WTC11 (cell line): ENCODE measurements at regions of chr4 and their contacts with region 1.

Region 1: GRCh38 chr4:37452952-37453280 is 208.4 kb downstream of the NWD2 start:
- DNase-seq: peak; percentile 45
- ATAC-seq: peak; percentile 72
- H3K4me3 Mint-ChIP-seq: peak overlapping the region; percentile 73
- H3K27ac Mint-ChIP-seq: no peak overlapping the region
- H3K4me1 Mint-ChIP-seq: peaks cover 15% of the 10 kb centered on the region
- H3K27me3 Mint-ChIP-seq: peaks cover 50% of the 10 kb centered on the region
- CTCF ChIP-seq: peak; percentile 36; the same call in 1 of the 2 replicates

Region 2: GRCh38 chr4:37441276-37441994 is 11.5 kb before region 1 on chr4:
- CTCF ChIA-PET with region 1: interaction called, 22 read pairs
- POLR2A ChIA-PET with region 1: no interaction called
- DNase-seq: no peak
- ATAC-seq: no peak
- H3K4me3 Mint-ChIP-seq: no peak overlapping the region
- H3K27ac Mint-ChIP-seq: no peak overlapping the region
- H3K4me1 Mint-ChIP-seq: no peaks in the 10 kb centered on the region
- H3K27me3 Mint-ChIP-seq: no peaks in the 10 kb centered on the region
- CTCF ChIP-seq: no peak

Region 3: GRCh38 chr4:37561803-37562207 is 108.9 kb after region 1 on chr4:
- CTCF ChIA-PET with region 1: interaction called, 27 read pairs
- POLR2A ChIA-PET with region 1: no interaction called
- DNase-seq: no peak
- ATAC-seq: no peak
- H3K4me3 Mint-ChIP-seq: no peak overlapping the region
- H3K27ac Mint-ChIP-seq: no peak overlapping the region
- H3K4me1 Mint-ChIP-seq: peaks cover 12% of the 10 kb centered on the region
- H3K27me3 Mint-ChIP-seq: peaks cover 4% of the 10 kb centered on the region
- CTCF ChIP-seq: no peak

Region 4: DNA sequence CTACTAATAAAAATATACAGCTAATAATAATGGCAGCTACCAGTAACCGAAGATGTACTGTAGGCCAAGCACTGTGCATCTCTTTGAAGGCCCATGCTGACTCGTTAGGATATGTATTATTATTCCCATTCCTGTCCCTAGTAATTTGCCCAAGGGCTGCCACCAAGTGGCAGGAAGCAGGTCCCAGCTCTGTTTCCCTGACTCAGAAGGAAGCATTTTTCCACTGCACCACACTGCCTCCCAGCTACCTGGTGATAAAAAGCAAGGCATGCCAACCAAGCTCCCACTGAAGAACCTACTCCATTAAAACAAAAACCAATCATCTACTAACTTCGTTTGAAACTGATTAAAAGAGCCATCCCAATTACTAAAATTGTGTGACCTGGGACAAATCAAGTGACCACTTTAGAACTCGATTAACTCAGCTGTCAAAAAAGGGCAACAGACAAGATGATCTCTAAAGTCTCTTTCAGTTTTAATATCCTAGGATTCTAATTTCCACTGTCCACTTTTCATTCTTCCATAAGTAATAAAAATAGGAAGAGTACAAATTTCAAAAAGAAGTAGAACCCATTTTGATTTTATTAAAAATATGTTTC is 349.3 kb after region 1 on chr4:
- CTCF ChIA-PET with region 1: interaction called, 28 read pairs
- POLR2A ChIA-PET with region 1: no interaction called
- DNase-seq: peak; percentile 39
- ATAC-seq: peak; percentile 96
- H3K4me3 Mint-ChIP-seq: no peak overlapping the region
- H3K27ac Mint-ChIP-seq: no peak overlapping the region
- H3K4me1 Mint-ChIP-seq: peaks cover 20% of the 10 kb centered on the region
- H3K27me3 Mint-ChIP-seq: no peaks in the 10 kb centered on the region
- CTCF ChIP-seq: no peak